ENCODE measurements at regions of chr4 and their contacts with region 1.

Region 1: GRCh38 chr4:173522123-173522950 is 7.7 kb downstream of the HAND2 start:
- DNase-seq: peak; percentile 85
- ATAC-seq: peak; percentile 96
- H3K4me3 ChIP-seq: peak overlapping the region; percentile 35
- H3K27ac ChIP-seq: peak overlapping the region; percentile 42; the same call in 1 of the 2 replicates
- H3K4me1 ChIP-seq: no peaks in the 10 kb centered on the region
- H3K27me3 ChIP-seq: peaks cover 76% of the 10 kb centered on the region
- CTCF ChIP-seq: no peak
- POLR2A ChIP-seq: no peak
- RAD21 ChIP-seq: no peak

Region 2: GRCh38 chr4:173494013-173494970 is 28.0 kb before region 1 on chr4:
- CTCF ChIA-PET with region 1: no interaction called
- POLR2A ChIA-PET with region 1: interaction called, 12 read pairs
- dilution Hi-C with region 1: no loop called
- in situ Hi-C with region 1: no loop called
- intact Hi-C with region 1: no loop called
- DNase-seq: peak; percentile 62
- ATAC-seq: peak; percentile 73
- H3K4me3 ChIP-seq: peak overlapping the region; percentile 47
- H3K27ac ChIP-seq: no peak overlapping the region
- H3K4me1 ChIP-seq: peaks cover 16% of the 10 kb centered on the region
- H3K27me3 ChIP-seq: peaks cover 32% of the 10 kb centered on the region
- CTCF ChIP-seq: peak; percentile 70
- POLR2A ChIP-seq: no peak
- RAD21 ChIP-seq: peak; percentile 69

Region 3: DNA sequence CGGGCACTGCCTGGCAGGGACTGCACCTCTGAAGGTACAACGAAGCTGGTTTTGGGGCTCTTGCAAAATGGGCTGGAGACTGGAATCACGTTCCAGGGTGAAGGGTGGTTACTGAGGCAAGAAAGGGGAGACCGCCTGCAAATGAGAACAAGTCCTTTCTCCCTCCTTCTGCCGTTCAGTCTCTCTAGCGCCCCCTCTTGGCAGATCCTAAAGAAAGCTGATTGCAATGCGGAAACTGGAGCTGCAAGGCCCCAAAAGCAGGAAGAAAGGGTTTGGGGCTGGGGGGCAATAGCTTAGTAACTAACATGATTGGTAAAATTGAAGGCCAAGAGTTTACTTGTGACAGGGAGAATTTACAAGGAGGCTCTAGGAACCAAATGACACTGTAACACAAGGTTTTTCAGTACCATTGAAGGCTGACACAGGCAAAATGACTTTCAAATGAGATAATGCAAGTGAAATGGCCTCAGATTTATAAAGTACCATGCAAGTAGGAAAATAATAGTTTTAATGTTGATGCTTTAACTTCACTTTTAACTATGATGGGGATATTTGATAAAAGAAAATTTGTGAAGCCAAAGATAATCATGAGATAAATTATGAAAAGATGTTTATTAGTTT is 230.4 kb after region 1 on chr4:
- CTCF ChIA-PET with region 1: no interaction called
- POLR2A ChIA-PET with region 1: no interaction called
- dilution Hi-C with region 1: no loop called
- in situ Hi-C with region 1: no loop called
- intact Hi-C with region 1: no loop called
- DNase-seq: peak; percentile 4
- ATAC-seq: no peak
- H3K4me3 ChIP-seq: no peak overlapping the region
- H3K27ac ChIP-seq: no peak overlapping the region
- H3K4me1 ChIP-seq: no peaks in the 10 kb centered on the region
- H3K27me3 ChIP-seq: no peaks in the 10 kb centered on the region
- CTCF ChIP-seq: 0 out of 2 replicates have a peak, but pooled peaks have one; percentile 18
- POLR2A ChIP-seq: no peak
- RAD21 ChIP-seq: no peak

Region 4: GRCh38 chr4:173807347-173807746 is 285.0 kb after region 1 on chr4:
- CTCF ChIA-PET with region 1: no interaction called
- POLR2A ChIA-PET with region 1: no interaction called
- dilution Hi-C with region 1: no loop called
- in situ Hi-C with region 1: no loop called
- intact Hi-C with region 1: no loop called
- DNase-seq: no peak
- ATAC-seq: no peak
- H3K4me3 ChIP-seq: no peak overlapping the region
- H3K27ac ChIP-seq: no peak overlapping the region
- H3K4me1 ChIP-seq: no peaks in the 10 kb centered on the region
- H3K27me3 ChIP-seq: no peaks in the 10 kb centered on the region
- CTCF ChIP-seq: no peak
- POLR2A ChIP-seq: no peak
- RAD21 ChIP-seq: no peak

Region 5: GRCh38 chr4:173990126-173990868 is 468.0 kb after region 1 on chr4:
- CTCF ChIA-PET with region 1: interaction called, 6 read pairs
- POLR2A ChIA-PET with region 1: no interaction called
- dilution Hi-C with region 1: no loop called
- in situ Hi-C with region 1: no loop called
- intact Hi-C with region 1: loop called (anchors 5 kb)
- DNase-seq: peak; percentile 46
- ATAC-seq: peak; percentile 83
- H3K4me3 ChIP-seq: no peak overlapping the region
- H3K27ac ChIP-seq: no peak overlapping the region
- H3K4me1 ChIP-seq: no peaks in the 10 kb centered on the region
- H3K27me3 ChIP-seq: peaks cover 2% of the 10 kb centered on the region
- CTCF ChIP-seq: peak; percentile 56
- POLR2A ChIP-seq: no peak
- RAD21 ChIP-seq: peak; percentile 69